ENCODE measurements at regions of chr7 and their contacts with region 1.

Region 1: DNA sequence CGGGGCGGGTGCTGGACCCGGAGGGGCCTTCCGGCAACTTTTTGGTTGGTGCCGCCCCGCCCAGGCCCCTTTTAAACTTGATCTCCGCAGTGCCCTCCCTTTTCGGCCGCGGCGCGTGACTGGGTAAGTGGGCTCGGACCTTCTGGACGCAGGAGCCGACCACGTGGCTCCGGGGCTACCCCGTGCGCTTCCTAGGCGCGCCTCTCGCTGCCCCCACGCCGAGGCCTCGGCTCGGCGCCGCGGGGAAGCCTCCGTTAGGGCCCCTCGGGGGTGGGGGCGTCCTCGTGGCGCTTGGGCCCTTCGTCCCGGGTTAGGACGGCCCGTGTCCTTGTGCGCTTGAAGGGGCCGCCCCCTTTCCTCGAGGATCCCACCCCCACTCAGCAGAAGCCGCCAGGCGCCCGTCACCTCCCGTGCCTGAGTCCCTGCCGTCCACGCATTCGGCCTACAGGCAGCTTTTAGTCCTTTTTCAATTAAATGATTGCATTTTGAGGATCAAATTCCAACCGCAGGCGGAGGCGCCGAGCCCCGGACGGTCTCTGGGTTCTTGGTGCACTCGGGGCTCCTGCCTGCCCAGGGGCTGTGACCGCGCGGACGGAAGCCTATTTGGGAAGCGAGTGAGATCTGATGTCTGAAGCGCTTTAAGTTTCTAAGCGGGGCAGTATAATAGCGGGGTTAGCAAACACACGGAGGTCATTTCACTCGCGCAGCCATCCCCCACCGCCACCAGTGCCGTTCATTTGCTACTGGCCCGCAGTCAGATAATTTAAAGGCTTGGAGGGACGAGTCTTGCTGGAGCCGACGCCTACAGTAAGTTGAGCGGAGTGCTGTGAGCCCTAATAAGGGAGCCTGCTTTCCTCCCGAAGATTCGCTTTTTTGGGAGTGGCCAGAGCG is 31.8 kb upstream of the TOMM7 start:
- H3K4me3 Mint-ChIP-seq: peak overlapping the region; percentile 94
- H3K27ac Mint-ChIP-seq: peak overlapping the region; percentile 93
- H3K4me1 Mint-ChIP-seq: peaks cover 5% of the 10 kb centered on the region
- H3K27me3 Mint-ChIP-seq: peaks cover 4% of the 10 kb centered on the region

Region 2: GRCh38 chr7:22675917-22676343 is 178.5 kb before region 1 on chr7:
- intact Hi-C with region 1: no loop called
- H3K4me3 Mint-ChIP-seq: no peak overlapping the region
- H3K27ac Mint-ChIP-seq: peak overlapping the region; percentile 67
- H3K4me1 Mint-ChIP-seq: peaks cover 59% of the 10 kb centered on the region
- H3K27me3 Mint-ChIP-seq: peaks cover 12% of the 10 kb centered on the region

Region 3: GRCh38 chr7:22822486-22823141 is 31.8 kb before region 1 on chr7 and contains the start of gene TOMM7:
- intact Hi-C with region 1: loop called (anchors 1 kb)
- H3K4me3 Mint-ChIP-seq: peak within 1 kb of the TSS; percentile 98
- H3K27ac Mint-ChIP-seq: peak within 1 kb of the TSS; percentile 96
- H3K4me1 Mint-ChIP-seq: peaks cover 19% of the 10 kb centered on the region
- H3K27me3 Mint-ChIP-seq: peaks cover 24% of the 10 kb centered on the region

Region 4: GRCh38 chr7:22896917-22897316 is 42.5 kb after region 1 on chr7:
- intact Hi-C with region 1: no loop called
- H3K4me3 Mint-ChIP-seq: no peak overlapping the region
- H3K27ac Mint-ChIP-seq: no peak overlapping the region
- H3K4me1 Mint-ChIP-seq: no peaks in the 10 kb centered on the region
- H3K27me3 Mint-ChIP-seq: peaks cover 5% of the 10 kb centered on the region

Region 5: GRCh38 chr7:22949944-22950343 is 95.5 kb after region 1 on chr7:
- intact Hi-C with region 1: loop called (anchors 10 kb)
- H3K4me3 Mint-ChIP-seq: no peak overlapping the region
- H3K27ac Mint-ChIP-seq: no peak overlapping the region
- H3K4me1 Mint-ChIP-seq: no peaks in the 10 kb centered on the region
- H3K27me3 Mint-ChIP-seq: no peaks in the 10 kb centered on the region